A549 (cell line): ENCODE measurements at regions of chr22 and their contacts with region 1.

Region 1: DNA sequence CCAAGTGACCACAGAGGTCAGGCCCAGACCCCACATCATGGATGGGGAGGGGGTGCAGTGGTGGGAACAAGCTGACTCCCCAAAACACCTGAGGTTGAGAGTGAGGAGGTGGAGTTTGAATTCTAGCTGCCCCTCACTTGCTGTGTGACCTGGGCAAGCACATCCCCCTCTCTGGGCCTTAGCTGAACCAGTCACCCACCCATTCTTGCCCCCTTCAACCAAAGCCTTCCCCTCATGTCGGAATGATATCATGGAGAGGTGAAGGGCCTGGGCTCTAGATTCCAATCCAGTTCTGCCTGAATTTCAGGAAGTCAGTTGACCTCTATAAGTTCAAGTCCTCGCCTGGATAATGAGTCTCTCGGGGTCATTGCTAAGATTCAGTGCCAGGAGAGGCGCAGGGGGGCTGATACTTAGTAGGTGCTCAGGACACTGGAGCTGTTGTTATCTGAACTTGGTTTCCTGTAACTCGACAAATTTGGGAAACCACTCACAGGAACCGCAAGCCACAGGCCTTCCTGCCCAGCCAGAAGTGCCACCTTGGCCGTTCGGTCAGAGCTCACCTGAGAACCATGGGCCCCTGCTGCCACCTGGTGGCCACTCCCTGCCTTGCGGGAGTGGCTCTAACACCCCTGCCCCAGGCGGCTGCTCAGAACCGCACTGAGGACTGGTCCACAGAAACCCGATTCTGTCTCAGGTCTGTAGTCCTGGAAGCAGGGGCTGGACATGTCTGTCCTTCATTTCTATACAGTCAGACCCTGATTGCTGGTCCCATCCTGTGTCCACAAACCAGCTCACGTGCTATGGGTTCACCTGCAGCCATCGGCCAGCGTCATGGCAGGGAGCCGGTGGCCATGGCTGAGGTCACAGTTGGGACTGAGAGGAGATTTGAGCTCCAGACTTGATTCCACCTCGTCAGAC is 6.9 kb downstream of the CDC42EP1 start:
- DNase-seq: peak; percentile 63 to 68
- ATAC-seq: peak; percentile 38 to 71; a peak in 5 of 6 replicates
- H3K4me3 ChIP-seq: no peak overlapping the region
- H3K27ac ChIP-seq: 0 out of 6 replicates have a peak overlapping the region, but pooled peaks of 1 of the 2 experiments have one; percentile 11
- H3K4me1 ChIP-seq: peaks cover 63% of the 10 kb centered on the region
- CTCF ChIP-seq: peak; percentile 74
- EP300 ChIP-seq: no peak
- POLR2A ChIP-seq: no peak
- RAD21 ChIP-seq: peak; percentile 83

Region 2: DNA sequence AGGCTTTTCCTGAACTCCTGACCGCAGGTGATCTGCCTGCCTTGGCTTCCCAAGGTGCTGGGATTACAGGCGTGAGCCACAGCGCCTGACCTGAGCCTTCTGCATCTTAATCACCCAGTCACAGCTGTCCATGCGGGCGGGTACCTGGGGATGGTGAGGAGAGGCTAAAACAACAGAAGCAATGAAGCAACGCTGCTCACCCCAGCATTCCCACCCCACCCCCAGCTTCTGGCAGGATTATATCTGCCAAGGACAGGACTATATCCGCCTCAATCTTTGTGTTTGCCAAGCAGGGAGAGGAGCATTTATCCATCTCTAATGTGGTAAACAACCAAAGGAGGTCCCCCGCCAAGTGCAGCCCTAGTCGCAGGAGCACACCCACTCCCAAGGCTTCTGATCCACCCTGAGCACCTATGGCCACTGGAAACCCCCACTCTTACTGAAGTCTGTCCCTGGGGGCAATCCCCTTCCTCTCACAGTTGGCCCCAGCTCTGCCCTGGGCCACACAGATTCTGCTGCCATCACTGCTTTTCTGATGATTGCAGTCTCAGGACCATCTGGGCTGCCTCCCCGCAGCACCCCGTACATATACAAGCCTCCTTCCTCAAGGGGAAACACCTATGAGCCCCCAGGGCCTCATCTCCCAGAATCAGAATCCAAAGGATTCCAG is 21.5 kb after region 1 on chr22:
- CTCF ChIA-PET with region 1: interaction called, 187 read pairs
- POLR2A ChIA-PET with region 1: interaction called, 5 read pairs
- DNase-seq: no peak
- ATAC-seq: no peak
- H3K4me3 ChIP-seq: no peak overlapping the region
- H3K27ac ChIP-seq: no peak overlapping the region
- H3K4me1 ChIP-seq: no peaks in the 10 kb centered on the region
- CTCF ChIP-seq: no peak
- EP300 ChIP-seq: no peak
- POLR2A ChIP-seq: no peak
- RAD21 ChIP-seq: no peak

Region 3: GRCh38 chr22:37658133-37659065 is 91.2 kb after region 1 on chr22 and contains the start of gene PDXP:
- CTCF ChIA-PET with region 1: no interaction called
- POLR2A ChIA-PET with region 1: no interaction called
- DNase-seq: peak; percentile 97 to 99
- ATAC-seq: peak; percentile 97 to 99
- H3K4me3 ChIP-seq: peak within 1 kb of the TSS; percentile 82
- H3K27ac ChIP-seq: peak within 1 kb of the TSS; percentile 77 to 92
- H3K4me1 ChIP-seq: peaks cover 15% of the 10 kb centered on the region
- CTCF ChIP-seq: no peak
- EP300 ChIP-seq: no peak
- POLR2A ChIP-seq: peak; percentile 64
- RAD21 ChIP-seq: no peak
- polyA plus RNA-seq, gene PDXP: 13.1 and 17.9 TPM in 2 replicates

Region 4: GRCh38 chr22:37696657-37697537 is 129.7 kb after region 1 on chr22 and contains the start of gene TRIOBP:
- CTCF ChIA-PET with region 1: no interaction called
- POLR2A ChIA-PET with region 1: no interaction called
- DNase-seq: peak; percentile 77 to 87
- ATAC-seq: peak; percentile 96 to 99
- H3K4me3 ChIP-seq: no peak within 1 kb of the TSS
- H3K27ac ChIP-seq: peak within 1 kb of the TSS in 1 of 2 experiments; percentile 54; a peak in 2 of 6 replicates
- H3K4me1 ChIP-seq: peaks cover 6% of the 10 kb centered on the region; the same call in 1 of the 3 replicates
- CTCF ChIP-seq: no peak
- EP300 ChIP-seq: no peak
- POLR2A ChIP-seq: no peak
- RAD21 ChIP-seq: peak in 1 of 2 experiments; percentile 6; a peak in 1 of 5 replicates
- polyA plus RNA-seq, gene TRIOBP: 15.7 and 32.6 TPM in 2 replicates

Region 5: DNA sequence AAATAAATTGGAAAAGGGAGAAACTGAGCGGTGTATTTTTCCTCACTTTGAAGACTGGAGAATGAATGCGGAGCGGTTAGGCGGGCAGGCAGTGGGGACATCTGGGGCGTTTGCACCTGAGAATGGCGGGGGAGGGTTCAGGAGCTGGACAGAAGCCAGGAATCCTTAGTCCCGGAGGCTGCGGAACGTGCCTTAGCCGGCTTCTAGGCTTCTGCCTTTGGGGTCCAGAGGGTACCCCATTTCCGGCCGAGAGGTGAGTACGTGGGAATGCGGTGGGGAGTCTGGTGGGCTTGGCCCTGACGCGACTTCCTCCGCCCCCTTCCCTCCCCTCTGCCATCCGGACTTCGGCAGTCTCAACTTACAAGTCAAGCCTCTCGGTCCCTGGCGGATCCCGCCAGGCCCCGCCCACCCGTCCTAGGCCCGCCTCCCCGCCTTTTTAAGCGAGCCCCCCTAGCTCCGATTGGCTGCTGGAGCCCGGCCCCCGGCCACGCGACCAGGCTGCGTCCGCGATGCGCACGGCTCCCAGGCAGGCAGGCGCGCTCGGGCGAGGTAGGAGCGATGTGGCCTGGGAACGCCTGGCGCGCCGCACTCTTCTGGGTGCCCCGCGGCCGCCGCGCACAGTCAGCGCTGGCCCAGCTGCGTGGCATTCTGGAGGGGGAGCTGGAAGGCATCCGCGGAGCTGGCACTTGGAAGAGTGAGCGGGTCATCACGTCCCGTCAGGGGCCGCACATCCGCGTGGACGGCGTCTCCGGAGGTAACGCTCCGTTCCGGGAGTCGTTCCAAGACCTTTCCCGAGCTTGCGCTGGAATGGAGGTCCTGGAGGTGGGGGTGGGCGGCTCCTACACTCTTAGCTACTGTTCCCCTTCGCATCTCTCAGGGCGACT is 240.5 kb after region 1 on chr22 and contains the start of gene GCAT:
- CTCF ChIA-PET with region 1: no interaction called
- POLR2A ChIA-PET with region 1: no interaction called
- DNase-seq: peak; percentile 91 to 94
- ATAC-seq: peak; percentile 71 to 88
- H3K4me3 ChIP-seq: peak within 1 kb of the TSS; percentile 69
- H3K27ac ChIP-seq: peak within 1 kb of the TSS; percentile 55 to 99; a peak in 5 of 6 replicates
- H3K4me1 ChIP-seq: peaks cover 20% of the 10 kb centered on the region
- CTCF ChIP-seq: no peak
- EP300 ChIP-seq: no peak
- POLR2A ChIP-seq: peak; percentile 28; the same call in 1 of the 2 replicates
- RAD21 ChIP-seq: no peak
- polyA plus RNA-seq, gene GCAT: 1.2 and 1.3 TPM in 2 replicates

Region 6: GRCh38 chr22:38162881-38163843 is 596.0 kb after region 1 on chr22:
- CTCF ChIA-PET with region 1: no interaction called
- POLR2A ChIA-PET with region 1: no interaction called
- DNase-seq: no peak
- ATAC-seq: no peak
- H3K4me3 ChIP-seq: no peak overlapping the region
- H3K27ac ChIP-seq: peak overlapping the region; percentile 67 to 70; a peak in 5 of 6 replicates
- H3K4me1 ChIP-seq: peaks cover 39% of the 10 kb centered on the region
- CTCF ChIP-seq: no peak
- EP300 ChIP-seq: no peak
- POLR2A ChIP-seq: no peak
- RAD21 ChIP-seq: no peak